A673 (cell line): ENCODE measurements at regions of chr1 and their contacts with region 1.

Region 1: GRCh38 chr1:207996636-207997035 is 85.7 kb upstream of the CD34 start:
- DNase-seq: no peak
- H3K4me3 ChIP-seq: no peak overlapping the region
- H3K27ac ChIP-seq: no peak overlapping the region
- H3K4me1 ChIP-seq: no peaks in the 10 kb centered on the region
- H3K27me3 ChIP-seq: peaks cover 18% of the 10 kb centered on the region
- CTCF ChIP-seq: no peak

Region 2: DNA sequence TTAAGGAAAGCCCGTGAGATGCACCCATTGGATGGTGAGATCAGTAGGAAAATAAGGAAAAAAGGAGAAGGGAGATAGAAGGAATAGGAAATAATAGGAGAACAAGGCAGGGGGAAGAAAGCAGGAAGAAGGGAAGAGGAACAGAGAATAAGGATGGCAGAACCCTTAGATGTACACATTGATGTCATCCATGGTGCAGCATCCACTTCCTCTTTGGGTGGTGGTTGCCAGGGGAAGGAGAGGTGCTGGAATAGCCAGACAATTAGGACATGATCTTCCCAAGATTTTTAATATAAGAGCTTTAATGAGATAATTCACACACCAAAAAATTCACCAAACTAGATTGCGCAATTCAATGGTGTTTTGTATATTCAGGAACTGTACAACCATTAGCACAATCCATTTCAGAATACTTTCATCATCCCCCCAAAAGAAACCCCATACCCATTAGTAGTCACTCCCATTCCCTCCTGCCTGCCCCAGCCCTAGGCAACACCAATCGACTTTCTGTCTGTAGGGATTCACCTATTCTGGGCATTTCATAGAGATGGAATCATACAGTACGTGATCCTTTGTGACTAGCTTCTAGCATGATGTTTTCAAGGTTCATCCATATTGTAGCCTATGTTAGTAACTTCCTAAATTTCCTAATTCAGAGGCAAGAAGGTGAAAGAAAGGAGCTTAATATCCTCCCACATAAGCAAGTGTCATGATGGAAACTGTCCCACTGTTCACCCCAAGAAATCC is 126.1 kb after region 1 on chr1:
- CTCF ChIA-PET with region 1: no interaction called
- POLR2A ChIA-PET with region 1: interaction called, 20 read pairs
- intact Hi-C with region 1: no loop called
- DNase-seq: no peak
- H3K4me3 ChIP-seq: no peak overlapping the region
- H3K27ac ChIP-seq: no peak overlapping the region
- H3K4me1 ChIP-seq: no peaks in the 10 kb centered on the region
- H3K27me3 ChIP-seq: peaks cover 12% of the 10 kb centered on the region
- CTCF ChIP-seq: no peak